Dendritic cell treated with granulocyte-macrophage colony-stimulating factor and Interleukin-4, amounts not matched to agents 40 ng/mL and 50 ng/mL, for 4 days (primary cell): ENCODE measurements at regions of chr9 and their contacts with region 1.

Region 1: GRCh38 chr9:87336914-87337333 is 160.7 kb upstream of the DAPK1 start:
- H3K4me3 Mint-ChIP-seq: peak overlapping the region; percentile 50
- H3K27ac Mint-ChIP-seq: no peak overlapping the region
- H3K4me1 Mint-ChIP-seq: peaks cover 12% of the 10 kb centered on the region
- H3K27me3 Mint-ChIP-seq: peaks cover 31% of the 10 kb centered on the region

Region 2: GRCh38 chr9:87606841-87607521 is 270.1 kb after region 1 on chr9:
- intact Hi-C with region 1: no loop called
- H3K4me3 Mint-ChIP-seq: no peak overlapping the region
- H3K27ac Mint-ChIP-seq: peak overlapping the region; percentile 69
- H3K4me1 Mint-ChIP-seq: peaks cover 84% of the 10 kb centered on the region
- H3K27me3 Mint-ChIP-seq: no peaks in the 10 kb centered on the region

Region 3: GRCh38 chr9:87662808-87663528 is 326.0 kb after region 1 on chr9:
- intact Hi-C with region 1: loop called (anchors 1 kb)
- H3K4me3 Mint-ChIP-seq: no peak overlapping the region
- H3K27ac Mint-ChIP-seq: peak overlapping the region; percentile 35
- H3K4me1 Mint-ChIP-seq: peaks cover 38% of the 10 kb centered on the region
- H3K27me3 Mint-ChIP-seq: no peaks in the 10 kb centered on the region